ENCODE measurements at regions of chr3 and their contacts with region 1.

Region 1: DNA sequence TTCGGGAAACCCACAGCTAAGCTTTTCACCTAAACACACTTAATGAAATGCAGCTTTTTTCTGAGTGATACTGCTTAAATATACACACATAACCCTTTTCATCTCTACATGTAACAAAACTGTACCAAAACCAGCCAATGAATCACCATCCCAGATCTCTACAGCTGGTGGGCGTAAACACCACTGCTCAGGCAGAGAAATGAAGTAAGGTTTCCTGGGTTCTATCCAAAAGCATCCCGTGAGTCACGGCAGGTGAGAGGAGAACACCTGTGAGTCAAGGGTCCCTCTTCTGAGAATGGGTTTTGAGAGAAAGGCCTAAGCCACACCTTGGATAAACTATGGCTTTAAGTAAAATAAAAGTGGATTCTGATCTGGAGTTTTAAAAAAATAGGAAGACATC is 2.6 kb downstream of the CLDN1 start:
- DNase-seq: no peak
- ATAC-seq: peak; percentile 21
- H3K4me3 ChIP-seq: peak overlapping the region; percentile 12
- H3K27ac ChIP-seq: no peak overlapping the region
- H3K4me1 ChIP-seq: peaks cover 15% of the 10 kb centered on the region
- H3K27me3 ChIP-seq: peaks cover 4% of the 10 kb centered on the region
- CTCF ChIP-seq: no peak

Region 2: GRCh38 chr3:189961525-189962161 is 358.0 kb before region 1 on chr3:
- intact Hi-C with region 1: no loop called
- DNase-seq: no peak
- ATAC-seq: peak; percentile 92
- H3K4me3 ChIP-seq: no peak overlapping the region
- H3K27ac ChIP-seq: no peak overlapping the region
- H3K4me1 ChIP-seq: no peaks in the 10 kb centered on the region
- H3K27me3 ChIP-seq: no peaks in the 10 kb centered on the region
- CTCF ChIP-seq: peak; percentile 91

Region 3: GRCh38 chr3:190224863-190225692 is 94.6 kb before region 1 on chr3:
- intact Hi-C with region 1: loop called (anchors 5 kb)
- DNase-seq: no peak
- ATAC-seq: peak; percentile 57
- H3K4me3 ChIP-seq: no peak overlapping the region
- H3K27ac ChIP-seq: no peak overlapping the region
- H3K4me1 ChIP-seq: no peaks in the 10 kb centered on the region
- H3K27me3 ChIP-seq: no peaks in the 10 kb centered on the region
- CTCF ChIP-seq: peak; percentile 50

Measured in upper lobe of right lung (tissue), 1 donor.